ENCODE measurements at regions of chr7 and their contacts with region 1.

Region 1: DNA sequence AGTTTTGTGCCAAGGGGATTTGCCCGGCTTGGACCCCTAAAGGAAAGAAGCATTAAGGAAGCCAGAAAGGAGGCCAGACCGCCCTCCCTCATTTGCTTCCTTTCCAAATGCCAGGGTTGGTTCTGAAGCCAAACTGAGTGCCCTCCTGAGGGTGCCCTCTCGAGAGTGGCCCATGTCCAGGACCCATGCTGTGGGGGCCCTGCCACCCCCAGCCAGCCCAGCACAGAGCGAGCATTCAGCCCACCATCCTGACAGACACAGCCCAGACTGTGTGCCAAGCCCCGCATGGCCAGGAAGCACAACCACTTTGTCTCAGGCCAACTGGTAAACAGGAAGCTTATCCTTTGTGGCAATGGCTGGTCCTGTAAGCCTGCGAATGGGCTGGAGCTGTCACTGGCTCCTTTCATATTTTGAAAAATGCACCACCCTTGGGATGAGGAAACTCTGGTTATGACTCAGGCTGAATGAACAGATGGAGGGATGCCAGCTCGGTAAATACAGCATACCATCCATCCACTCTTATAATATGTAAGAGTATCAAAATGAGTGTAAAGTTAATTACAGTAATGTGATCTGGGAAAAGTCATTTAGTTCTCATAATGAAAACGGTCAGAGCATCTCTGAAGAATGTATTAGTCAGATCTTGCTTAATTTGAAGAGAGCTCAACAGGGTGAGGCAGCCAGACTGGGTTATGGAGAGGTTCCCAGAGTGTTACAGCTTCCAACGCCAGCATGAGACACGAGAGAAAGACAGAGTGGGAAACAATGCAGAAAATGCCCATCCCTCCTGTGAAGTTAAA is 65.0 kb downstream of the STK17A start:
- DNase-seq: peak; percentile 74
- ATAC-seq: peak; percentile 58
- H3K4me3 Mint-ChIP-seq: peak overlapping the region; percentile 57
- H3K27ac Mint-ChIP-seq: peak overlapping the region; percentile 99
- H3K4me1 Mint-ChIP-seq: peaks cover 93% of the 10 kb centered on the region
- H3K27me3 Mint-ChIP-seq: no peaks in the 10 kb centered on the region
- CTCF ChIP-seq: no peak

Region 2: GRCh38 chr7:43590862-43591550 is 56.9 kb before region 1 on chr7:
- CTCF ChIA-PET with region 1: interaction called, 173 read pairs
- POLR2A ChIA-PET with region 1: interaction called, 159 read pairs
- intact Hi-C with region 1: loop called (anchors 2 kb)
- DNase-seq: peak; percentile 77
- ATAC-seq: peak; percentile 56
- H3K4me3 Mint-ChIP-seq: peak overlapping the region; percentile 46
- H3K27ac Mint-ChIP-seq: peak overlapping the region; percentile 86
- H3K4me1 Mint-ChIP-seq: peaks cover 80% of the 10 kb centered on the region
- H3K27me3 Mint-ChIP-seq: no peaks in the 10 kb centered on the region
- CTCF ChIP-seq: no peak

Region 3: DNA sequence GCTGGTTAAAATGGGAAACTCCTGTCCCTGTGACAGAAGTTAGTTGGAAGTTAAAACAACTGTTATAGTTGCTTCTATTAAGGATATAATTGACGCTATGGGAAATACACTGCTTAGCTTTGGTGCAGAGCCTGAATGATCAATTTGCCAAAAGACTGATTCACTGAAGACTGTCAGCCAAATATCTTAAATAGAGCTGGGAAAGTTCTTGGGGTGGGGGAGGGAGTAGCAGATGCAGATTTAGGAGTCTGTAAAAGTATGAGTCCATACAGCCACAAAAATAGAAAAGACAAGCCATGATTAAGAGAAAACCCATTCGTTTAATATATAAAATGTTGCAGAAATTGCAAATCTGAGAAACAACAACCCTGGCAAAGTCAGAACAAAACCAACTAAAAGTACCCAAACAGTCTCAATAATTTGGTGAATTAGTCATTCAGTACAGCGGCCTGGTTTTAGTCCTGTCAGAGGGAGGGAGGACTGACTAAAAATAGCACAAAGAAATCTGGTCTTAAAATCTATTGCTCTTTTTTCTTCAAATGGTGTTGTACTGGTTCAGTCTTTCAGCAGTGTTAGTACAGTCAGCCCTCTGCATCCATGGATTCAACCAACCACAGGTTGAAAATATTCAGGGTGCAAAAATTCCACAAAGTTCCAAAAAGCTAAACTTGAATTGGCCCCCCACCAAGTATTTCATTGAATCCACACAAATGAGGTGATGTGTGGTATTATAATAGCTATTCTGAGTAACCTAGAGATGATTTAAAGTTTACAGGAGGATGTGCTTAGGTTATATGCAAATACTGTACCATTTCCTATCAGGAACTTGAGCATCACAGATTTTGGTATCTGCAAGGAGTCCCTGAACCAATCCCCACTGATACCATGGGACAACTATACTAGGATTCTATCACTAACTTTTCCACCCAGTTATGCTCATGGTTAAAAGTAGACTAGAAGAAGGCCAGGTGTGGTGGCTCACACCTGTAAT is 35.0 kb before region 1 on chr7:
- CTCF ChIA-PET with region 1: no interaction called
- POLR2A ChIA-PET with region 1: interaction called, 13 read pairs
- intact Hi-C with region 1: loop called (anchors 5 kb)
- DNase-seq: peak; percentile 52
- ATAC-seq: peak; percentile 79
- H3K4me3 Mint-ChIP-seq: peak overlapping the region; percentile 22
- H3K27ac Mint-ChIP-seq: peak overlapping the region; percentile 96
- H3K4me1 Mint-ChIP-seq: peaks cover 67% of the 10 kb centered on the region
- H3K27me3 Mint-ChIP-seq: no peaks in the 10 kb centered on the region
- CTCF ChIP-seq: no peak

Region 4: GRCh38 chr7:43625453-43625852 is 22.4 kb before region 1 on chr7:
- CTCF ChIA-PET with region 1: interaction called, 17 read pairs
- POLR2A ChIA-PET with region 1: interaction called, 30 read pairs
- intact Hi-C with region 1: loop called (anchors 1 kb)
- DNase-seq: peak; percentile 84
- ATAC-seq: peak; percentile 75
- H3K4me3 Mint-ChIP-seq: peak overlapping the region; percentile 17
- H3K27ac Mint-ChIP-seq: peak overlapping the region; percentile 80
- H3K4me1 Mint-ChIP-seq: peaks cover 90% of the 10 kb centered on the region
- H3K27me3 Mint-ChIP-seq: no peaks in the 10 kb centered on the region
- CTCF ChIP-seq: no peak

Region 5: GRCh38 chr7:43631559-43631958 is 16.3 kb before region 1 on chr7:
- CTCF ChIA-PET with region 1: interaction called, 17 read pairs
- POLR2A ChIA-PET with region 1: interaction called, 20 read pairs
- intact Hi-C with region 1: no loop called
- DNase-seq: no peak
- ATAC-seq: peak; percentile 47
- H3K4me3 Mint-ChIP-seq: peak overlapping the region; percentile 24
- H3K27ac Mint-ChIP-seq: peak overlapping the region; percentile 90
- H3K4me1 Mint-ChIP-seq: peaks cover 94% of the 10 kb centered on the region
- H3K27me3 Mint-ChIP-seq: no peaks in the 10 kb centered on the region
- CTCF ChIP-seq: no peak

Region 6: DNA sequence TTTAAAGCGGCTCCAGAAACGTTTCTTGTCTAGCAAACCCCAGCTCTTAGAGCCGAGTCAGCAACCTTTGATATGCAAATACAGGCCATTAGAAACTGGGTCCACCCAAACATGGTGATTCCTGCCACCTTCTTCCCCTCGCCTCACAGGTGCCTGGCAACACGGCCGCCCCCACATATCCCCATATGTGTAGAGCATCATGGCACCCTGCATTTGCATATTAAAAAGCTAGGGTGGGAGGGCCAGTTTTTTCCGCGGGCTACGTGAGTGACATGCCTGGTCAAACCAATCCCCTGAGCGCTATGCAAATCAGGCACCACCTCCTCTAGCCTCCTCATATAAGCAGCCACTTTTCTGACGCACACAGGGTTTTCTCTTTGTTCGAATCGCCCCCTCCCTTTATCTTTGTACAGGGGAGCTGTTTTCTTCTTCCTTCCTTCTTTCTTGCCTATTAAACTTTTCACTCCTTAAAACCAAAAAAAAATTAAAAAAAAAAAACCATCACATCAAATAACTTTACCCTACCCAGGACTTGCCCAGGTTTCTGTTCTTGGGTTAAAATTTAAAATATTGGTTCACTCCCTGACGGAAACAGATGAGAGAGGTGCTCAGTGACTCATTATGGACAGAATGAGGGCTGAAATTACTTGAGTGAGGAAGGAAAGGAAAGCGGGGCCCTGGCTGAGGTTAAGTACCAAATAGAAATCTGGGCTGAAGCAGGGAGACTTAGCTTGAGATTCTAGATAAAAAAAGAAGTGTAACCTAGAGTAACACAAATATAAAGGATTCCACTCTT is 21.6 kb after region 1 on chr7:
- CTCF ChIA-PET with region 1: interaction called, 4 read pairs
- POLR2A ChIA-PET with region 1: interaction called, 10 read pairs
- intact Hi-C with region 1: no loop called
- DNase-seq: peak; percentile 95
- ATAC-seq: peak; percentile 85
- H3K4me3 Mint-ChIP-seq: peak overlapping the region; percentile 75
- H3K27ac Mint-ChIP-seq: peak overlapping the region; percentile 97
- H3K4me1 Mint-ChIP-seq: peaks cover 79% of the 10 kb centered on the region
- H3K27me3 Mint-ChIP-seq: no peaks in the 10 kb centered on the region
- CTCF ChIP-seq: no peak

Region 7: DNA sequence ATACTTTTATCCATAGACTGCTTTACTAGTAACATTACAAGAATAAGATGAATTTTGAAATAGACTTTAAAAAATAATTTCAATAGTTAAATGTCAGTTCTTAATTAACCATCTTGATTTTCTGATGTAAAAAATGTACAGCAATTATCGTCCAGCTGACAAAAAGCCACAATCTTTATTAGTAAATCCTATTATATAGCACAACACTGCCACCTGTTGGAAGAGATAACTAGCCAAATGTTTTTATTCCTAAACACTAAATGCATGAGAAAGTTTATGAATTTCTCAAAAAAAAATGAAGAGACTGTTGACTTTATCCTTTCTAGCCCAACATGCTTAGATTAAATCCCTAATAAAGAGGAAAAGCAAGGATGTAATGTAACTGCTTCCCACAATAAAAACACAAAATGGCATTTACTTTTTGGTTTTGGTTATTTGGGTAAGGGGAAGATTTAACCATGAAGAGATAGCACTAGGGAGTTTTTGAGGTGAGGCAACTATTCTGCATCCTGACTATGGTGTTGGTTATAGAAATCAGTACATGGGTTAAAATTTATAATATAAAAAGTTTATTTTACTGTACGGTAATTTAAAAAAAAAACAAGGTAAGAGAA is 73.4 kb after region 1 on chr7:
- CTCF ChIA-PET with region 1: interaction called, 11 read pairs
- POLR2A ChIA-PET with region 1: no interaction called
- intact Hi-C with region 1: no loop called
- DNase-seq: no peak
- ATAC-seq: no peak
- H3K4me3 Mint-ChIP-seq: no peak overlapping the region
- H3K27ac Mint-ChIP-seq: no peak overlapping the region
- H3K4me1 Mint-ChIP-seq: peaks cover 52% of the 10 kb centered on the region
- H3K27me3 Mint-ChIP-seq: no peaks in the 10 kb centered on the region
- CTCF ChIP-seq: peak; percentile 80

Measured in activated CD8-positive, alpha-beta T cell treated with anti-CD3 and anti-CD28 coated beads for 36 hours (primary cell).